Caco-2 (cell line): ENCODE measurements at regions of chr14 and their contacts with region 1.

Region 1: GRCh38 chr14:57066887-57067513 is 201.7 kb downstream of the EXOC5 start:
- DNase-seq: peak; percentile 54 to 72
- H3K4me3 ChIP-seq: no peak overlapping the region
- H3K4me3 Mint-ChIP-seq: no peak overlapping the region
- H3K27ac Mint-ChIP-seq: no peak overlapping the region
- H3K4me1 ChIP-seq: no peaks in the 10 kb centered on the region
- H3K4me1 Mint-ChIP-seq: peaks cover 7% of the 10 kb centered on the region
- H3K27me3 ChIP-seq: no peaks in the 10 kb centered on the region
- H3K27me3 Mint-ChIP-seq: no peaks in the 10 kb centered on the region
- CTCF ChIP-seq: peak; percentile 69 to 84

Region 2: GRCh38 chr14:56555921-56556570 is 511.0 kb before region 1 on chr14:
- CTCF ChIA-PET with region 1: no interaction called
- POLR2A ChIA-PET with region 1: no interaction called
- intact Hi-C with region 1: loop called (anchors 2 kb)
- DNase-seq: peak in 1 of 2 experiments; percentile 52
- H3K4me3 ChIP-seq: no peak overlapping the region
- H3K4me3 Mint-ChIP-seq: no peak overlapping the region
- H3K27ac Mint-ChIP-seq: no peak overlapping the region
- H3K4me1 ChIP-seq: 0 out of 2 replicates have a peak, but pooled peaks cover 4% of the 10 kb centered on the region
- H3K4me1 Mint-ChIP-seq: no peaks in the 10 kb centered on the region
- H3K27me3 ChIP-seq: no peaks in the 10 kb centered on the region
- H3K27me3 Mint-ChIP-seq: peaks cover 2% of the 10 kb centered on the region
- CTCF ChIP-seq: peak; percentile 63 to 83

Region 3: DNA sequence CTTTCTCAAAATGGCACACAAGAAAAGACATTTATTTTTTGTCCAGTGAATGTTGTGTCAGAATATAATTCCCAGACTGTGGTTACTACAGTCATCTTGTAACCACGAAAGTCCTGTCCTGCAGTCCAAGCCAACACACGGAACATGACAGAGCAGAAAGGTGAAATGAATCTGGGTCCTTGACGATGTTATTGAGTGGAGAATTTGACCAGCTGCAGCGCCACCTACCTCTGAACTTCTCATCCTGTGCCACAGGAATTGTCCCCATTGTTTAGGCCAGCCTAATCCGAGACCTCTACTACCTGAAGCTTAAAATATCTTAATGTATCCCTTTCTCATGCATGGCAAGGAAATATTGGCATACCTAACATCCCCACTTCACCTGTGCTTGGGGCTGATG is 192.6 kb before region 1 on chr14:
- CTCF ChIA-PET with region 1: no interaction called
- POLR2A ChIA-PET with region 1: no interaction called
- intact Hi-C with region 1: loop called (anchors 10 kb)
- DNase-seq: peak; percentile 49 to 52
- H3K4me3 ChIP-seq: no peak overlapping the region
- H3K4me3 Mint-ChIP-seq: no peak overlapping the region
- H3K27ac Mint-ChIP-seq: no peak overlapping the region
- H3K4me1 ChIP-seq: no peaks in the 10 kb centered on the region
- H3K4me1 Mint-ChIP-seq: no peaks in the 10 kb centered on the region
- H3K27me3 ChIP-seq: no peaks in the 10 kb centered on the region
- H3K27me3 Mint-ChIP-seq: peaks cover 4% of the 10 kb centered on the region
- CTCF ChIP-seq: peak; percentile 55 to 57

Region 4: GRCh38 chr14:57189070-57189469 is 122.1 kb after region 1 on chr14:
- CTCF ChIA-PET with region 1: no interaction called
- POLR2A ChIA-PET with region 1: no interaction called
- intact Hi-C with region 1: loop called (anchors 2 kb)
- DNase-seq: peak in 1 of 2 experiments; percentile 4
- H3K4me3 ChIP-seq: no peak overlapping the region
- H3K4me3 Mint-ChIP-seq: no peak overlapping the region
- H3K27ac Mint-ChIP-seq: no peak overlapping the region
- H3K4me1 ChIP-seq: no peaks in the 10 kb centered on the region
- H3K4me1 Mint-ChIP-seq: no peaks in the 10 kb centered on the region
- H3K27me3 ChIP-seq: 0 out of 2 replicates have a peak, but pooled peaks cover 2% of the 10 kb centered on the region
- H3K27me3 Mint-ChIP-seq: peaks cover 9% of the 10 kb centered on the region
- CTCF ChIP-seq: peak in 1 of 2 experiments; percentile 24

Region 5: GRCh38 chr14:57293866-57294837 is 227.2 kb after region 1 on chr14:
- CTCF ChIA-PET with region 1: no interaction called
- POLR2A ChIA-PET with region 1: no interaction called
- intact Hi-C with region 1: loop called (anchors 10 kb)
- DNase-seq: no peak
- H3K4me3 ChIP-seq: no peak overlapping the region
- H3K4me3 Mint-ChIP-seq: no peak overlapping the region
- H3K27ac Mint-ChIP-seq: no peak overlapping the region
- H3K4me1 ChIP-seq: peaks cover 29% of the 10 kb centered on the region
- H3K4me1 Mint-ChIP-seq: no peaks in the 10 kb centered on the region
- H3K27me3 ChIP-seq: no peaks in the 10 kb centered on the region
- H3K27me3 Mint-ChIP-seq: no peaks in the 10 kb centered on the region
- CTCF ChIP-seq: peak in 1 of 2 experiments; percentile 25